GM12878 (cell line): ENCODE measurements at regions of chr5 and their contacts with region 1.

Region 1: GRCh38 chr5:58849921-58850667 is 267.2 kb downstream of the RAB3C start:
- DNase-seq: no peak
- ATAC-seq: peak; percentile 75
- H3K4me3 ChIP-seq: no peak overlapping the region
- H3K27ac ChIP-seq: no peak overlapping the region
- H3K4me1 ChIP-seq: no peaks in the 10 kb centered on the region
- H3K27me3 ChIP-seq: no peaks in the 10 kb centered on the region
- CTCF ChIP-seq: peak; percentile 33 to 57 (median 41); a peak in 4 of 6 replicates
- EP300 ChIP-seq: no peak
- POLR2A ChIP-seq: no peak
- RAD21 ChIP-seq: peak; percentile 52

Region 2: GRCh38 chr5:57779383-57780223 is 1070.5 kb before region 1 on chr5:
- CTCF ChIA-PET with region 1: interaction called, 7 read pairs
- POLR2A ChIA-PET with region 1: no interaction called
- RAD21 ChIA-PET with region 1: interaction called, 5 read pairs
- SMC1A ChIA-PET with region 1: no interaction called
- in situ Hi-C with region 1: loop called (anchors 25 kb)
- intact Hi-C with region 1: no loop called
- DNase-seq: no peak
- ATAC-seq: peak; percentile 83
- H3K4me3 ChIP-seq: no peak overlapping the region
- H3K27ac ChIP-seq: no peak overlapping the region
- H3K4me1 ChIP-seq: no peaks in the 10 kb centered on the region
- H3K27me3 ChIP-seq: peaks cover 0 to 2% of the 10 kb centered on the region in 2 experiments; a peak in 1 of 4 replicates
- CTCF ChIP-seq: peak; percentile 40 to 55 (median 45); a peak in 5 of 6 replicates
- EP300 ChIP-seq: no peak
- POLR2A ChIP-seq: no peak
- RAD21 ChIP-seq: peak; percentile 73

Region 3: GRCh38 chr5:58477760-58478376 is 372.2 kb before region 1 on chr5:
- CTCF ChIA-PET with region 1: interaction called, 52 read pairs
- POLR2A ChIA-PET with region 1: no interaction called
- RAD21 ChIA-PET with region 1: interaction called, 27 read pairs
- SMC1A ChIA-PET with region 1: interaction called, 98 read pairs
- in situ Hi-C with region 1: loop called (anchors 5 kb)
- intact Hi-C with region 1: loop called (anchors 1 kb)
- DNase-seq: no peak
- ATAC-seq: 0 out of 3 replicates have a peak, but pooled peaks have one; percentile 27
- H3K4me3 ChIP-seq: no peak overlapping the region
- H3K27ac ChIP-seq: no peak overlapping the region
- H3K4me1 ChIP-seq: no peaks in the 10 kb centered on the region
- H3K27me3 ChIP-seq: no peaks in the 10 kb centered on the region
- CTCF ChIP-seq: peak in 2 of 3 experiments; percentile 18 to 34; a peak in 3 of 6 replicates
- EP300 ChIP-seq: no peak
- POLR2A ChIP-seq: no peak
- RAD21 ChIP-seq: peak; percentile 45

Region 4: DNA sequence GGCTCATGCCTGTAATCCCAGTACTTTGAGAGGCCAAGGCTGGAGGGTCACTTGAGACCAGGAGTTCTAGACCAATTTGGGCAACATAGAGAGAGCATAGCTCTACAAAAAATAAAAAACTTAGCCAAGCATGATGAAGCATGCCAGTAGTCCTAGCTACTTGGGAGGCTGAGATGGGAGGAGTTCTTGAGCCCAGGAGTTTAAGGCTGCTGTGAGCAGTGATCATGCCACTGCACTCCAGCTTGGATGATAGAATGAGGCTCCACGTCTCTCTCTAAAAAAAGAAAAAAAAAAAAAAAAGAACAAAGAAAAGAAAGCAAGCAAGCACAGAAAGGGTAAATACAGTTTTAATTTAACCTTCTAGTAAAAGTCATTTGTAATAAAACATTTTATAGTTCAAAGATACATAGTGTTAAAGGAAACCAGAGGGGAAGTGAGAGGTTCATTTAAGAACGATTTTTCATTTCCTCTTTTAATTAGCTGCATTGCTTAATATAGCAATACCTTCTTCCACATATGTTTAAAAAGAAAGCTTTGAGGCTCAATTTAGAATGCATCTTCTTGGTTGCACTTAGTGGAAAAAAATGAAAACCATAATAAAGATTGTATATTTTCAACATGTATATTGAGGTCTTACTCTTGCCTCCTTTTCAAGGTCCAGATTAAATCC is 344.0 kb before region 1 on chr5:
- CTCF ChIA-PET with region 1: interaction called, 4 read pairs
- POLR2A ChIA-PET with region 1: no interaction called
- RAD21 ChIA-PET with region 1: interaction called, 3 read pairs
- SMC1A ChIA-PET with region 1: interaction called, 6 read pairs
- in situ Hi-C with region 1: loop called (anchors 10 kb)
- intact Hi-C with region 1: no loop called
- DNase-seq: no peak
- ATAC-seq: peak; percentile 62
- H3K4me3 ChIP-seq: no peak overlapping the region
- H3K27ac ChIP-seq: no peak overlapping the region
- H3K4me1 ChIP-seq: peaks cover 5% of the 10 kb centered on the region
- H3K27me3 ChIP-seq: no peaks in the 10 kb centered on the region
- CTCF ChIP-seq: no peak
- EP300 ChIP-seq: no peak
- POLR2A ChIP-seq: no peak
- RAD21 ChIP-seq: no peak

Region 5: DNA sequence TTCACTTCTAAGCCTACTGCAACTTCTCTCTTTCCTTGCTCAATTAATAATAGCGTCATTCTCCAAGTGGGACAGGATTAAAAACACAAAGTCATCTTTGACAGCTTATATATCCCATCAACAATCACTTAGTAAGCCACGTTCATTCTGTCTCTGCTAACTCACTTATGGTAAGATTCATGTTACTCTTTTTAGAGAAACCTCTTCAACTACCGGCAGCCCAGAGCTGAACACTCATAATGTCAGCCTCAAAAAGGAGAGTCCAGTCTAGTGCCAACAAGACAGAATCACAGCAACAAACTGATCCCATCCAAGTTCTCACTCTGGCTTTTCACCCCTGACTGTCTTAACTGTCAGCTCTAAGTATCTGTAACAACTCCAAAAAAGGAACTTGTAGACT is 71.2 kb before region 1 on chr5:
- CTCF ChIA-PET with region 1: no interaction called
- POLR2A ChIA-PET with region 1: no interaction called
- RAD21 ChIA-PET with region 1: no interaction called
- SMC1A ChIA-PET with region 1: no interaction called
- in situ Hi-C with region 1: no loop called
- intact Hi-C with region 1: no loop called
- DNase-seq: no peak
- ATAC-seq: no peak
- H3K4me3 ChIP-seq: no peak overlapping the region
- H3K27ac ChIP-seq: no peak overlapping the region
- H3K4me1 ChIP-seq: no peaks in the 10 kb centered on the region
- H3K27me3 ChIP-seq: no peaks in the 10 kb centered on the region
- CTCF ChIP-seq: no peak
- EP300 ChIP-seq: no peak
- POLR2A ChIP-seq: no peak
- RAD21 ChIP-seq: no peak

Region 6: DNA sequence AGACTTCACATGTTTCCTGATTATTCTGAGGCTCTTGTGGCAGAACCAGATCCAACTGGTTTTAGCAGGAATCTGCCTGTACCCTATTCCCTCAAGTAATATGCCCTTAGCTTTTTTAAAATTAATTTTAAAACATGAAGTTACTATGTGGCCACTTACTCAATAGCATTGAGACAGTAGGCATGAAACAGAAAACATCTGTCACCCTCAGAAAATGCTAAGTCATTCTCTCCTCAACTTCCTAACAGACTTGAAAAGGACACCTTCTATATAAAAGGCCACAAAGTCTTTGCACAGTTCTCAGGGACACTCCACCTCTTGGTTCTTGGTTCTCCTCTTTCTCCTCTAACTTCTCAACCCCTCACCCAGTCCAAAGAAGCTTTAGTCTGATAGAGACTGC is 10.6 kb after region 1 on chr5:
- CTCF ChIA-PET with region 1: interaction called, 31 read pairs
- POLR2A ChIA-PET with region 1: interaction called, 3 read pairs
- RAD21 ChIA-PET with region 1: no interaction called
- SMC1A ChIA-PET with region 1: interaction called, 3 read pairs
- in situ Hi-C with region 1: no loop called
- intact Hi-C with region 1: no loop called
- DNase-seq: no peak
- ATAC-seq: no peak
- H3K4me3 ChIP-seq: no peak overlapping the region
- H3K27ac ChIP-seq: no peak overlapping the region
- H3K4me1 ChIP-seq: no peaks in the 10 kb centered on the region
- H3K27me3 ChIP-seq: no peaks in the 10 kb centered on the region; a peak in 1 of 4 replicates
- CTCF ChIP-seq: no peak
- EP300 ChIP-seq: no peak
- POLR2A ChIP-seq: no peak
- RAD21 ChIP-seq: no peak